Naive thymus-derived CD4-positive, alpha-beta T cell (primary cell): ENCODE measurements at regions of chr7 and their contacts with region 1.

Region 1: GRCh38 chr7:107661081-107661864 is 645 bp downstream of the SLC26A4 start:
- DNase-seq: peak in 7 of 9 donors; percentile 12 to 60 (median 14)
- ATAC-seq: peak; percentile 66
- H3K4me3 ChIP-seq: peak overlapping the region; percentile 30
- H3K4me3 Mint-ChIP-seq: peak overlapping the region; percentile 56 to 96 (median 84)
- H3K27ac ChIP-seq: no peak overlapping the region
- H3K27ac Mint-ChIP-seq: peak overlapping the region in 1 of 9 donors; percentile 87
- H3K4me1 ChIP-seq: peaks cover 0 to 2% of the 10 kb centered on the region in 2 donors
- H3K4me1 Mint-ChIP-seq: peaks cover 12 to 44% (median 21%) of the 10 kb centered on the region in 7 donors
- H3K27me3 ChIP-seq: peaks cover 3 to 19% of the 10 kb centered on the region in 2 donors
- H3K27me3 Mint-ChIP-seq: peaks cover 0 to 67% (median 49%) of the 10 kb centered on the region in 5 donors

Region 2: DNA sequence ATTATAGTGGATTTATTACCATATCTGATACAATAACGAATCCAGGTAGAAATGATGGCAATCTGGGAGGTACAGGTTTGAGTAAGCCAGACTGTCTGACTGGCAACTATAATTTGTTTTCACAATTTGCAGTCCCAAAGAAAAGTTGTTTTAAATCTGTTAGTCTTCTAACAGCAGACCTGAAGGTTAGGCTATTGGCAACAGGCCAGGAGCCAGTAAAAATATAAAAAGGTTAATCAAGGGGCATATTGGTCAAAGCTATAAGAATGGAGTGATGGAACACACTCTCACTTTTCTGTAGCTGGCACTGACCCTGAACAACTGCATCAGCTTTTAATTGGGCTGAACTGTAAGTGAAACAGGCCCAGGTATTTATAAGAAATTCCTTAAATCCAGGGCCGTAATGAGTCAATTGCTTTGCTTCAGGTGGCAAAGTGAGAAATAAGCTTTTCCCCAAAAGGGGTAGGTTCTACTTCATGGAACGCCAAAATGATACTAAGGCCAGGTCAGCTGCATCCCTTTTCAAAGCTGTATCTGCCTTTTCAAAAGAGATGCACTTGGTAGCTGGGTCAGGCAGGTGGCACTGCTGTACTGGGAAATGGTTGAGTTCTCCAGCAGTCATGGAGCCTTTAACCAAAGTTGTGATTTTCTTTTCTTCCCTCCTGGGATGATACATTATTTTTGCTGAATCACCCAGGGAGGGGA is 198.4 kb before region 1 on chr7:
- CTCF ChIA-PET with region 1: no interaction called
- POLR2A ChIA-PET with region 1: no interaction called
- intact Hi-C with region 1: loop called in 1 of 2 experiments (anchors 5 kb)
- DNase-seq: peak; percentile 10 to 47 (median 36)
- ATAC-seq: peak; percentile 82
- H3K4me3 ChIP-seq: no peak overlapping the region
- H3K4me3 Mint-ChIP-seq: no peak overlapping the region
- H3K27ac ChIP-seq: no peak overlapping the region
- H3K27ac Mint-ChIP-seq: peak overlapping the region in 1 of 9 donors; percentile 19
- H3K4me1 ChIP-seq: no peaks in the 10 kb centered on the region
- H3K4me1 Mint-ChIP-seq: peaks cover 0 to 6% (median 0%) of the 10 kb centered on the region in 7 donors
- H3K27me3 ChIP-seq: no peaks in the 10 kb centered on the region
- H3K27me3 Mint-ChIP-seq: no peaks in the 10 kb centered on the region

Region 3: GRCh38 chr7:107579885-107580715 is 81.2 kb before region 1 on chr7 and contains the start of gene BCAP29:
- CTCF ChIA-PET with region 1: interaction called, 4 read pairs
- POLR2A ChIA-PET with region 1: no interaction called
- intact Hi-C with region 1: loop called in 1 of 2 experiments (anchors 1 kb)
- DNase-seq: peak; percentile 50 to 83 (median 65)
- ATAC-seq: peak; percentile 98
- H3K4me3 ChIP-seq: peak within 1 kb of the TSS; percentile 97
- H3K4me3 Mint-ChIP-seq: peak within 1 kb of the TSS; percentile 83 to 94 (median 90)
- H3K27ac ChIP-seq: peak within 1 kb of the TSS; percentile 72
- H3K27ac Mint-ChIP-seq: peak within 1 kb of the TSS; percentile 43 to 93 (median 87)
- H3K4me1 ChIP-seq: peaks cover 4 to 8% of the 10 kb centered on the region in 2 donors
- H3K4me1 Mint-ChIP-seq: peaks cover 6 to 34% (median 25%) of the 10 kb centered on the region in 7 donors
- H3K27me3 ChIP-seq: no peaks in the 10 kb centered on the region
- H3K27me3 Mint-ChIP-seq: no peaks in the 10 kb centered on the region
- total RNA-seq, gene BCAP29: 10.5 to 38.7 (median 14.4) TPM

Region 4: GRCh38 chr7:107622429-107622828 is 38.8 kb before region 1 on chr7:
- CTCF ChIA-PET with region 1: no interaction called
- POLR2A ChIA-PET with region 1: no interaction called
- intact Hi-C with region 1: loop called in 1 of 2 experiments (anchors 2 kb)
- DNase-seq: no peak
- ATAC-seq: peak; percentile 57
- H3K4me3 ChIP-seq: no peak overlapping the region
- H3K4me3 Mint-ChIP-seq: no peak overlapping the region
- H3K27ac ChIP-seq: no peak overlapping the region
- H3K27ac Mint-ChIP-seq: no peak overlapping the region
- H3K4me1 ChIP-seq: no peaks in the 10 kb centered on the region
- H3K4me1 Mint-ChIP-seq: no peaks in the 10 kb centered on the region
- H3K27me3 ChIP-seq: no peaks in the 10 kb centered on the region
- H3K27me3 Mint-ChIP-seq: no peaks in the 10 kb centered on the region

Region 5: GRCh38 chr7:107644309-107644974 is 16.8 kb before region 1 on chr7:
- CTCF ChIA-PET with region 1: no interaction called
- POLR2A ChIA-PET with region 1: no interaction called
- intact Hi-C with region 1: loop called in 1 of 2 experiments (anchors 2 kb)
- DNase-seq: no peak
- ATAC-seq: no peak
- H3K4me3 ChIP-seq: no peak overlapping the region
- H3K4me3 Mint-ChIP-seq: peak overlapping the region in 1 of 10 donors; percentile 62
- H3K27ac ChIP-seq: no peak overlapping the region
- H3K27ac Mint-ChIP-seq: peak overlapping the region in 1 of 9 donors; percentile 9
- H3K4me1 ChIP-seq: no peaks in the 10 kb centered on the region
- H3K4me1 Mint-ChIP-seq: peaks cover 0 to 34% (median 0%) of the 10 kb centered on the region in 7 donors
- H3K27me3 ChIP-seq: no peaks in the 10 kb centered on the region
- H3K27me3 Mint-ChIP-seq: peaks cover 2 to 13% (median 10%) of the 10 kb centered on the region in 5 donors

Region 6: GRCh38 chr7:107687656-107688055 is 26.4 kb after region 1 on chr7:
- CTCF ChIA-PET with region 1: no interaction called
- POLR2A ChIA-PET with region 1: no interaction called
- intact Hi-C with region 1: no loop called
- DNase-seq: no peak
- ATAC-seq: no peak
- H3K4me3 ChIP-seq: no peak overlapping the region
- H3K4me3 Mint-ChIP-seq: no peak overlapping the region
- H3K27ac ChIP-seq: no peak overlapping the region
- H3K27ac Mint-ChIP-seq: no peak overlapping the region
- H3K4me1 ChIP-seq: no peaks in the 10 kb centered on the region
- H3K4me1 Mint-ChIP-seq: peaks cover 0 to 20% (median 13%) of the 10 kb centered on the region in 7 donors
- H3K27me3 ChIP-seq: no peaks in the 10 kb centered on the region
- H3K27me3 Mint-ChIP-seq: peaks cover 0 to 14% (median 2%) of the 10 kb centered on the region in 5 donors

Region 7: DNA sequence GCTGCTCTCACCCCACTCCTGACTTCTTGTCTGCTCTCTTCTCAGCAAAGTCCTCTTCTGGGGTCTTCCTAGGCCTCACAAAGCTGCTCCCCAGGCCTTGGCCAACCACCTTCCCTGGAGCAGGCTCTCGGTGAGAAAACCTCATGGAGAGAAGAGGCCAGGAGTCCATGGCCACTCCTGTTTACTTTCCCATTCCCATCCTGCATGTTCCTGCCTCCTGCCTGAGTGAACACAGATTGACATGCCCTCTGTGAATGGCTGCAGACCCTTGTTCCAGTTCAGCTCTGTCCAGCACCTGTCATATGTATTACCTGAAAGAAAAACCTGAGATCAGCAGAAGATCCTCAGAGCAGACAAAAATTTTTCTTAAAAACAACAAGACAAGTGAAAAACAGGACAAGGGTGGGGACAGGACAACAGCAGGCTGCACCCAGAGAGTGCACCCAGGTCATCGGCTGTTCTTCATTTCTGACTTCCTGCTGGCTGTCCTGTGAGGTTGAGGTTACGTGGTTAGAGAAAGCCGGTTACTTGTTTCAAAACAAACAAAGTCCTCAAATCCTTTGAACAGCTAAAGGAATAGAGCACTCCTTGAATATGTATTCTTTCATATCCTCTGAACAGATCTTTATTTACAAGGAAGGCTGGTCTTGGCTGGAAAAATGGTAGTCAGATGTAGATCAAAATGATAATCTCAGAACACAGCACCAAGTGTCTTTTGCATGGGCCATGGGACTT is 195.7 kb after region 1 on chr7:
- CTCF ChIA-PET with region 1: no interaction called
- POLR2A ChIA-PET with region 1: no interaction called
- intact Hi-C with region 1: no loop called
- DNase-seq: peak in 5 of 9 donors; percentile 24 to 41 (median 33)
- ATAC-seq: peak; percentile 68
- H3K4me3 ChIP-seq: peak overlapping the region; percentile 13
- H3K4me3 Mint-ChIP-seq: peak overlapping the region; percentile 25 to 74 (median 56)
- H3K27ac ChIP-seq: peak overlapping the region; percentile 19
- H3K27ac Mint-ChIP-seq: peak overlapping the region; percentile 71 to 91 (median 84)
- H3K4me1 ChIP-seq: peaks cover 20 to 33% of the 10 kb centered on the region in 2 donors
- H3K4me1 Mint-ChIP-seq: peaks cover 21 to 48% (median 38%) of the 10 kb centered on the region in 7 donors
- H3K27me3 ChIP-seq: no peaks in the 10 kb centered on the region
- H3K27me3 Mint-ChIP-seq: peaks cover 0 to under 1% (median 0%) of the 10 kb centered on the region in 5 donors

Region 8: DNA sequence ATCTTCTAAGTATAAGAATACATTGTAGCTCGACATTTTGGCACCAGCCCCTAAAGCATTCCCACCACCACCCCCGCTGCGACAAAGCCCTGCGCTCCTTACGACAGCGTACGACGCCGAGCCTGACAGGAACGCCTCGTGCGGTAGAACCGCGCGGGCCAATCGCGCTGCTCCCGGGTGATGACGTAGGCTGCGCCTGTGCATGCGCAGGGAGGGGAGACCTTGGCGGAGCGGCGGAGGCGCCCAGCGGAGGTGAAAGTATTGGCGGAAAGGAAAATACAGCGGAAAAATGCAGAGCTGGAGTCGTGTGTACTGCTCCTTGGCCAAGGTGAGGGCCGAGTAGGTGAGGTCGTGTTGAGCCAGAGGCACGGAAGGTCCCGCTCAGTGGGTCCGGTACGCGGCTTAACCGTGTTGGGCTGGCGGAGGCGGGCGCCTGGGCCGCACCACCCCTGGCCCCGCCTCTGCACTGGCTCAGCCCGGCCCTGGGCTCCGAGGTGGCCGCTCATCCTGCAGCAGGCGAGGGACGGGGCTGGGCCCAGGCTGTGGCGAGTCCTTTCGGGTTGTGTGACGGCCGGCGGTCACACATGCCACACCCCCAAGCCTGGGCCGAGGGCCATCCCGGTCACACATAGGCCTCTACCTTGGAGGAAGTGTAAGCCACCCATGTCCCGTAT is 229.8 kb after region 1 on chr7 and contains the start of gene DLD:
- CTCF ChIA-PET with region 1: no interaction called
- POLR2A ChIA-PET with region 1: no interaction called
- intact Hi-C with region 1: loop called in 1 of 2 experiments (anchors 1 kb)
- DNase-seq: peak; percentile 89 to 94 (median 93)
- ATAC-seq: peak; percentile 98
- H3K4me3 ChIP-seq: peak within 1 kb of the TSS; percentile 93
- H3K4me3 Mint-ChIP-seq: peak within 1 kb of the TSS; percentile 89 to 100 (median 97)
- H3K27ac ChIP-seq: peak within 1 kb of the TSS; percentile 97
- H3K27ac Mint-ChIP-seq: peak within 1 kb of the TSS; percentile 94 to 100 (median 98)
- H3K4me1 ChIP-seq: peaks cover 5 to 35% of the 10 kb centered on the region in 2 donors
- H3K4me1 Mint-ChIP-seq: peaks cover 20 to 55% (median 52%) of the 10 kb centered on the region in 7 donors
- H3K27me3 ChIP-seq: no peaks in the 10 kb centered on the region
- H3K27me3 Mint-ChIP-seq: peaks cover 0 to 3% (median 0%) of the 10 kb centered on the region in 5 donors
- total RNA-seq, gene DLD: 44.5 to 69.3 (median 53.7) TPM

Region 9: DNA sequence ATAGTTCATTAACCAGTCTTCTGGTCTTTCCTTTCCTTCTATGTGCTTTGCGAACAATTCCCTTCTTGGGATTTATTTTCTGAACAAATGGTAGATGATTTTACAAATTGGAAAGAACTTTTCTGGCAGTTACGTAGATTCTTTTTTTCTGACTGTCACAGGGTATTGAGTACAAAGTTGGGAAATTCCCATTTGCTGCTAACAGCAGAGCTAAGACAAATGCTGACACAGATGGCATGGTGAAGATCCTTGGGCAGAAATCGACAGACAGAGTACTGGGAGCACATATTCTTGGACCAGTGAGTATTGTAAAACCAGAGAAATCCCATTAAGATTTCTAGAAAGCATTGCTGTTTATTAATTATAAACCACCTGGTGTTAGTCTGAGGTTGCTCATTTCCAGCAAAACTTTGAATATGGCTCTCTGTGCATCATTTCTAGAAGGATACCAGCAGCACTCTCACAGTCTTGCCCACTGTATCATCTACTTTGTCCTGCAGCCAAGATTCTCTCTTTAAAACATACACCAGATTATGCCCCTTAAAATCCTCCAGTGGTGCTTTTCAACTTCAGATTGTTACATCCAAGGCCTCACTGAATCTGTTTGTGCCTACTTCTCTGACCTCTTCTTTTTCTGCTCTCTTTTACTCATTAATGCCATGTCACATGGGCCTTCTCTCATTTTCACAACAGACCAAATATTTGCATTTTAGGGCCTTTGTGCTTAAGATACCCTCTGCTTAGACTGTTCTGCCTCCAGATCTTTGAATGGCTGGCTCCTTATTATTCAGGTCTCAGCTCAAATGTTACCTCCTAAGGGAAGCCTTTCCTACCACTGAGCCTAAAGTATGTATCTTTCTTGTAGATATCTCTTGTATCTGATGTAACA is 256.7 kb after region 1 on chr7:
- CTCF ChIA-PET with region 1: no interaction called
- POLR2A ChIA-PET with region 1: no interaction called
- intact Hi-C with region 1: no loop called
- DNase-seq: no peak
- ATAC-seq: no peak
- H3K4me3 ChIP-seq: no peak overlapping the region
- H3K4me3 Mint-ChIP-seq: no peak overlapping the region
- H3K27ac ChIP-seq: no peak overlapping the region
- H3K27ac Mint-ChIP-seq: peak overlapping the region in 1 of 9 donors; percentile 12
- H3K4me1 ChIP-seq: peaks cover 0 to 2% of the 10 kb centered on the region in 2 donors
- H3K4me1 Mint-ChIP-seq: peaks cover 12 to 46% (median 35%) of the 10 kb centered on the region in 7 donors
- H3K27me3 ChIP-seq: no peaks in the 10 kb centered on the region
- H3K27me3 Mint-ChIP-seq: no peaks in the 10 kb centered on the region